ENCODE measurements at regions of chr14 and their contacts with region 1.

Region 1: GRCh38 chr14:91060351-91061055 is at the start of gene RPS6KA5:
- DNase-seq: peak; percentile 100
- H3K4me3 Mint-ChIP-seq: peak within 1 kb of the TSS; percentile 87
- H3K27ac Mint-ChIP-seq: peak within 1 kb of the TSS; percentile 61
- H3K4me1 Mint-ChIP-seq: peaks cover 57% of the 10 kb centered on the region
- H3K27me3 Mint-ChIP-seq: no peaks in the 10 kb centered on the region
- total RNA-seq, gene RPS6KA5: 18.8 to 19.3 TPM

Region 2: DNA sequence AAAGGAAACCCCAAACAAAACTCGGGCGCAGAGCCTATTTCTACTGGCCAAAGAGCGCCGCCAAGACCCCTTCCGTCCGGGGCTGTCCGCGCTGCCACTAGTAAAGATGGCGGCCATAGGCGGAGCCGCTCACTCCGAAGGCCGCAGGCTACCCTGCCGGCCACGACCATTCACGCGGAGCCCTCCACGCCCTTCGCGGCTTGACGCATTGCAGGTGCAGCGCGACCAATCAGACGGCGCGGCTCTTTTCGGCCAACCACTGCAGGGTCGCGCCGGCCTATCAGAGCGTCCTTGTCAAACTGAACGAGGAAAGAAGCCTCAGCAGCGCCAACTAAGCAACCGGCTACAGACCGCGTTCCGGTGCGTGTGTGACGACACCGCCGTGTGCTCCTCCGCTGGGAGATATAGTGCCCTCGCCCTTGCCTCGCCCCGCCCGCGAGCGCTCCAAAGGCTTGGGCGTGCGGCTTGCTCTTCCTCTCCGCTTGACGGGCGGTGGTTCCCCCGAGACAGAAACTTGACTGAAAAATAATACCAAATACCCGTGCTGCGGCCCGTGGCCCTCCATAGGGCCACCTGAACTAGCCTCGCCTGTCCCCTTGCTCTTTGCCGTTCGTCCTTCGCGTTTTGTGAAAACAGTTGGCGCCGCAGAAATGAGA is 677.3 kb before region 1 on chr14:
- CTCF ChIA-PET with region 1: no interaction called
- POLR2A ChIA-PET with region 1: interaction called, 3 read pairs
- intact Hi-C with region 1: loop called (anchors 5 kb)
- DNase-seq: peak; percentile 99
- H3K4me3 Mint-ChIP-seq: no peak overlapping the region
- H3K27ac Mint-ChIP-seq: no peak overlapping the region
- H3K4me1 Mint-ChIP-seq: peaks cover 22% of the 10 kb centered on the region
- H3K27me3 Mint-ChIP-seq: no peaks in the 10 kb centered on the region

Region 3: GRCh38 chr14:90827916-90828610 is 232.4 kb before region 1 on chr14:
- CTCF ChIA-PET with region 1: no interaction called
- POLR2A ChIA-PET with region 1: no interaction called
- intact Hi-C with region 1: loop called (anchors 1 kb)
- DNase-seq: peak; percentile 96
- H3K4me3 Mint-ChIP-seq: peak overlapping the region; percentile 80
- H3K27ac Mint-ChIP-seq: peak overlapping the region; percentile 88
- H3K4me1 Mint-ChIP-seq: peaks cover 21% of the 10 kb centered on the region
- H3K27me3 Mint-ChIP-seq: no peaks in the 10 kb centered on the region

Region 4: GRCh38 chr14:90987140-90987539 is 73.4 kb before region 1 on chr14:
- CTCF ChIA-PET with region 1: interaction called, 3 read pairs
- POLR2A ChIA-PET with region 1: interaction called, 4 read pairs
- intact Hi-C with region 1: loop called (anchors 5 kb)
- DNase-seq: no peak
- H3K4me3 Mint-ChIP-seq: no peak overlapping the region
- H3K27ac Mint-ChIP-seq: peak overlapping the region; percentile 61
- H3K4me1 Mint-ChIP-seq: peaks cover 47% of the 10 kb centered on the region
- H3K27me3 Mint-ChIP-seq: no peaks in the 10 kb centered on the region

Region 5: GRCh38 chr14:91078095-91078737 is 17.7 kb after region 1 on chr14:
- CTCF ChIA-PET with region 1: interaction called, 7 read pairs
- POLR2A ChIA-PET with region 1: interaction called, 12 read pairs
- intact Hi-C with region 1: loop called (anchors 1 kb)
- DNase-seq: peak; percentile 76
- H3K4me3 Mint-ChIP-seq: peak overlapping the region; percentile 13
- H3K27ac Mint-ChIP-seq: peak overlapping the region; percentile 87
- H3K4me1 Mint-ChIP-seq: peaks cover 30% of the 10 kb centered on the region
- H3K27me3 Mint-ChIP-seq: no peaks in the 10 kb centered on the region

Region 6: DNA sequence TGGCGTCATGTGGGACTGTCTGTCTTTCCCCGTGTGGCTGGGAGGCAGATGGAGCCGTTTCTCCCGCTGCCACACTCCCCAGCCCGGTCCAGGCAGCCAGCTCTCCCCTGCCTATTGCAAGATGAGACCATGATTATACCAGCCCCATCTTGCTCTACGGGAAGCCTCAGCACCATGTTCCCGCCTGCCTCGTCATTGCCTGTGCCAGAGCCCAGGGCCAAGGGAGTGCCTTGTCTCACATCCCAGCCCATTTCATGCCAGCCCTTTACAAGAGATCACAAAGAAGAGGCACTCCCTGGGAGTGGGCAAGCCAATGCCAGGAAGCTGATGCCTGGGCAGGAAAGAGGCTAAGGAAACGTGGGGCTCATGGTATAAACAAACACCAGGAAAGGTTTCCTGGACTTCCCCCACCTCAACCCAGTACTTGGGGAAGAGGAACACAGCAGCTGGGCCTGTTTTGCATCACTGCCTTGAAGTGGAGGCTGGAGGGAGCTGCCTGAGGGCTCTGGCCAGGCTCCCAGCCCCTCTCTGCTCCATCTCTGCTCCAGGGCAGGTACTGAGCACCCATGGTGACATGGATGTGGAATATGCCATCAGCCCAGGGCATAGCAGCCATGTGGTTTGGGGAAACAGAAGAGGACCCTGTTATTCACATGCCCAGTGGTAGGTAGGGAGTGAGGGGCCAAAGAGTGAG is 160.2 kb after region 1 on chr14:
- CTCF ChIA-PET with region 1: no interaction called
- POLR2A ChIA-PET with region 1: no interaction called
- intact Hi-C with region 1: no loop called
- DNase-seq: no peak
- H3K4me3 Mint-ChIP-seq: no peak overlapping the region
- H3K27ac Mint-ChIP-seq: peak overlapping the region; percentile 20
- H3K4me1 Mint-ChIP-seq: peaks cover 51% of the 10 kb centered on the region
- H3K27me3 Mint-ChIP-seq: no peaks in the 10 kb centered on the region

Region 7: DNA sequence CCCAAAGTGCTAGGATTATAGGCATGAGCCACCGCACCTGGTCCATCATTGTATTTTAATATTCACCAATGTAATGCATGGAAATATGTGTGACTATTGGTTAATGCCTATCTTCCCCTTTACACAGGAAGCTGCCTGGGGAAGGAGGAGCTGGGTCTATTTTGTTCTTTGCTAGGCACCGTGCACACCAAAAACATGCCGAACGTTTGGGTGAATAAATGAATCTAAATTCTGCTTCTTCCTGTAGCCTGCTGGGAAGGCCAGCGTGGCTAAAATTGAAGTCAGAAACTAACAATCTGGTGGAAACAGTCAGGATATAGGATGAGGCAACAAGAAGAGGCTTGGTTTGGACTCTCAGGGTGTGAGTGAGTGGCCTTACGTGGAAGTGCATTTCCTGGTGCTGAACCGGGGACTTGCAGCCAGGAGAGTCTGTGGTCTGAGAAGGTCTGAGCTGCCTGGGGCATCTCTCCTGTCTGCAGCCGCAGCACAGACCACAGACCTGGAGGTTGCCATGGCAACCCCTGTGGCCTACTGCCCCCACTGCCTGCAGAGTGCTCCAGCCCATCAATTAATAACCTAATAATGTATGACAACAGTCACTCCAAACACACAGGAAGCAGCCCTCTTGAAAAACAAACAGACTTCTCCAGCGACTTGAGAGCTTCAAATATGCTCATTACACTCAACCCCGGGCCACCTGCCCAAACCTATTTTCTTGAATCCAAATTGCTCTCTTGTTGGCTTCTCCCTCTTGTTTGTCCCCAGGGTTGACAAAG is 189.5 kb after region 1 on chr14:
- CTCF ChIA-PET with region 1: no interaction called
- POLR2A ChIA-PET with region 1: no interaction called
- intact Hi-C with region 1: loop called (anchors 5 kb)
- DNase-seq: peak; percentile 67
- H3K4me3 Mint-ChIP-seq: peak overlapping the region; percentile 36
- H3K27ac Mint-ChIP-seq: peak overlapping the region; percentile 92
- H3K4me1 Mint-ChIP-seq: peaks cover 85% of the 10 kb centered on the region
- H3K27me3 Mint-ChIP-seq: no peaks in the 10 kb centered on the region

Region 8: GRCh38 chr14:91286530-91286937 is 226.0 kb after region 1 on chr14:
- CTCF ChIA-PET with region 1: no interaction called
- POLR2A ChIA-PET with region 1: no interaction called
- intact Hi-C with region 1: no loop called
- DNase-seq: peak; percentile 87
- H3K4me3 Mint-ChIP-seq: no peak overlapping the region
- H3K27ac Mint-ChIP-seq: peak overlapping the region; percentile 57
- H3K4me1 Mint-ChIP-seq: peaks cover 5% of the 10 kb centered on the region
- H3K27me3 Mint-ChIP-seq: no peaks in the 10 kb centered on the region

Region 9: GRCh38 chr14:91418387-91419043 is 358.0 kb after region 1 on chr14:
- CTCF ChIA-PET with region 1: no interaction called
- POLR2A ChIA-PET with region 1: no interaction called
- intact Hi-C with region 1: loop called (anchors 2 kb)
- DNase-seq: peak; percentile 88
- H3K4me3 Mint-ChIP-seq: peak overlapping the region; percentile 61
- H3K27ac Mint-ChIP-seq: peak overlapping the region; percentile 72
- H3K4me1 Mint-ChIP-seq: peaks cover 32% of the 10 kb centered on the region
- H3K27me3 Mint-ChIP-seq: no peaks in the 10 kb centered on the region